PC-9 (cell line): ENCODE measurements at regions of chr12 and their contacts with region 1.

Region 1: DNA sequence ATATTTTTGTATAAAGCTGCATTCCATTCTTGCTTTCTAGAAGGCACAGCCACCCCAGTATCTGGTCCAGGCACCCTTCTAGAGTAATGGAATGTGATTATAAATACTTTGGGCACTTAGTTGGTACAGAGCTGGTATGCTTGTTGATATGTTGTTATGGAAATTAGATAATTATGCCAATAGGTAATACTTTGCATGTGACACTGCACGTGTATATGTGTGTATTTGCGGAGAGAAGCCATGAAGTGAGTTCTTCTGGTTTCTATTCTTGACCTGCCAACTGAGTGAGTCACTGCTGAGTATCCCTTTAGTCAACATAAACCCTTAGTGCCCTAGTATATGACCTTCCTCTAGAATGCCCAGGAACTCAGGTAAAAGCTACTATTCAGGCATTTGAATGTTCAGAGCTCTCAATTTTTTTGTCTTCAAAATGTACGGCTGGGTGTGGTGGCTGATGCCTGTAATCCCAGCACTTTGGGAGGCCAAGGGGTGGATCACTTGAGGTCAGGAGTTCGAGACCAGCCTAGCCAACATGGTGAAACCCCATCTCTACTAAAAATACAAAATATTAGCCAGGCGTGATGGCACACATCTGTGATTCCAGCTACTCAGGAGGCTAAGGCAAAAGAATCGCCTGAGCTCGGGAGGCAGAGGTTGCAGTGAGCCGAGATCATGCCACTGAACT is 6.2 kb upstream of the TCP11L2 start:
- DNase-seq: peak; percentile 38 to 98
- H3K4me3 ChIP-seq: no peak overlapping the region
- H3K27ac ChIP-seq: peak overlapping the region; percentile 84
- H3K4me1 ChIP-seq: peaks cover 44% of the 10 kb centered on the region
- H3K27me3 ChIP-seq: no peaks in the 10 kb centered on the region
- CTCF ChIP-seq: no peak

Region 2: GRCh38 chr12:106282457-106283097 is 13.8 kb before region 1 on chr12:
- CTCF ChIA-PET with region 1: interaction called, 20 read pairs
- POLR2A ChIA-PET with region 1: no interaction called
- intact Hi-C with region 1: no loop called
- DNase-seq: peak; percentile 15 to 62
- H3K4me3 ChIP-seq: no peak overlapping the region
- H3K27ac ChIP-seq: no peak overlapping the region
- H3K4me1 ChIP-seq: peaks cover 5% of the 10 kb centered on the region
- H3K27me3 ChIP-seq: no peaks in the 10 kb centered on the region
- CTCF ChIP-seq: peak; percentile 86